WTC11 (cell line): ENCODE measurements at regions of chr9 and their contacts with region 1.

Region 1: DNA sequence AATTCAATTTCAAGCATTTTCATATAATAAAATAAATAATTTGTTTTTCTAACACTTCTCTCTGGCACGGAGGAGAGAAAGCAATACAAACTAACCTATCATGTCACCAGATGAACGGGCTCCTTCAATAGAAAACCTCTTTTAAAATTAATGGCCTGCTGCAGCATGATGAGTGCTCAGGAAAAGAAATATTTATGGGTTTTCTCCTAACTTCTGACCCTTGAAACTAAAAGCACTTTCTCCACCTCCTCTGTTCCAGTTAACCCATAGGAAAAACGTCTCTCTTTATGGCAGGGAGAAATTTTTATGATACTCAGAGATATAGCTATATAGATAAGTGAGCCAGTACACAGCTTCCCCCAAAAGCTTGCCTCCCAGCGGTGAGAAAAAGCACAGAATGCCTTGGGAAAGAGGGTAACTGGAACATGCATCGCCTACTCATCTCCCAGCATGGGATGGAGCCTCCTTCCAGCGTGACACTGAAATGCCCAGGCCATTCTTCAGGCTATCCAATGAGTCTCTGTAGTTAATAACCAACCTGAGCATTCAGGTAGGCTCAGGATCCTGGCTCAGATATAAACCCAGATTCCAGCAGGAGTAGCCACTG is 963.0 kb upstream of the DMAC1 start:
- DNase-seq: peak; percentile 20
- ATAC-seq: peak; percentile 90
- H3K4me3 Mint-ChIP-seq: no peak overlapping the region
- H3K27ac Mint-ChIP-seq: no peak overlapping the region
- H3K4me1 Mint-ChIP-seq: peaks cover 14% of the 10 kb centered on the region
- H3K27me3 Mint-ChIP-seq: no peaks in the 10 kb centered on the region
- CTCF ChIP-seq: no peak

Region 2: GRCh38 chr9:8673830-8674229 is 88.8 kb before region 1 on chr9:
- CTCF ChIA-PET with region 1: interaction called, 11 read pairs
- POLR2A ChIA-PET with region 1: no interaction called
- DNase-seq: no peak
- ATAC-seq: peak; percentile 49; the same call in 1 of the 2 replicates
- H3K4me3 Mint-ChIP-seq: no peak overlapping the region
- H3K27ac Mint-ChIP-seq: no peak overlapping the region
- H3K4me1 Mint-ChIP-seq: peaks cover 21% of the 10 kb centered on the region
- H3K27me3 Mint-ChIP-seq: no peaks in the 10 kb centered on the region
- CTCF ChIP-seq: no peak

Region 3: GRCh38 chr9:8733131-8733954 is 29.2 kb before region 1 on chr9:
- CTCF ChIA-PET with region 1: no interaction called
- POLR2A ChIA-PET with region 1: no interaction called
- DNase-seq: peak; percentile 45
- ATAC-seq: peak; percentile 90
- H3K4me3 Mint-ChIP-seq: peak overlapping the region; percentile 51
- H3K27ac Mint-ChIP-seq: peak overlapping the region; percentile 95
- H3K4me1 Mint-ChIP-seq: peaks cover 47% of the 10 kb centered on the region
- H3K27me3 Mint-ChIP-seq: no peaks in the 10 kb centered on the region
- CTCF ChIP-seq: no peak